CD8-positive, alpha-beta T cell (primary cell): ENCODE measurements at regions of chr6 and their contacts with region 1.

Region 1: GRCh38 chr6:35731736-35732532 is 4.9 kb upstream of the ARMC12 start:
- DNase-seq: peak; percentile 86 to 98 (median 95)
- ATAC-seq: peak; percentile 55
- H3K4me3 ChIP-seq: peak overlapping the region; percentile 70 to 91
- H3K4me3 Mint-ChIP-seq: peak overlapping the region; percentile 91
- H3K27ac ChIP-seq: peak overlapping the region; percentile 91 to 95
- H3K27ac Mint-ChIP-seq: peak overlapping the region; percentile 89
- H3K4me1 ChIP-seq: peaks cover 87% of the 10 kb centered on the region
- H3K4me1 Mint-ChIP-seq: peaks cover 80% of the 10 kb centered on the region
- H3K27me3 ChIP-seq: no peaks in the 10 kb centered on the region
- H3K27me3 Mint-ChIP-seq: no peaks in the 10 kb centered on the region
- CTCF ChIP-seq: peak; percentile 17

Region 2: DNA sequence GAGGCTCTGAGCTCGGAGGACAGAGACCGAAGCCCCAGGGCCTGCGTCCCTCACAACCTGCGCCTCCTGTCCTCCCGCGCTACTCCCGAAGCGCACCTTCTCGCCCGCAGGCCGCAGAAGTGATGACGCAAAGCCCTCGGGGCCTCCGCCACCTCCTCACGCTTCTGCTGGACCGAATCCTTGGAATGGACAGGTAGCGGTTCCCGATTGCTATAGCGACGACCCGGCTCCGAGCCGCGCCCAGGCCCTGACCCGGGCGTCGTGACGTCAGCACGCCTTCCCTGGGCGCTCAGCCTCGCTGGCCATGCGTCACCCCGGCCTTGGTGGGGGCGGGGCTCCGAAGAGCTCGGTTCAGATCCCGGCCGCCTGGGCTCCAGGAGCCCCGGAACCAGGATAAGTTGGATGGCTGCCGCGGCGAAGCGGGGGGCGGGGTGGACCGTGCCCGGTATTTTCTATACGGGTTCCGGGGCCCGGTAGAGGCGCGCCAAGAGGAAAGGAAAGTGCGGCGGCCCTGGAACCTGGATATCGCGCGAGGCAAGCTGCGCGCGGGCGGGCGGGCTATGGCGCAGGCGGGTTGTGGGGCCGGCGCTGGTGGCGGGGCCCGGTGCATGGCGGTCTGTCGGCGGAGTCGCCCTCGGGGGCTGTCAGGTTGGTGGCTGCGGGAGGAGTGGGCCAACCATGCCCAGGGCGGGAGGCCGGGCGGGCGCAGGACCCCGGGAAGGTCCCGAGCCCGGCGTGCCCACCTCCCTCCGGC is 472.6 kb before region 1 on chr6 and contains the start of gene ZNF76:
- CTCF ChIA-PET with region 1: no interaction called
- POLR2A ChIA-PET with region 1: no interaction called
- intact Hi-C with region 1: loop called in 1 of 2 experiments (anchors 2 kb)
- DNase-seq: peak; percentile 86 to 97 (median 93)
- ATAC-seq: peak; percentile 73
- H3K4me3 ChIP-seq: peak within 1 kb of the TSS; percentile 75 to 95
- H3K4me3 Mint-ChIP-seq: peak within 1 kb of the TSS; percentile 97
- H3K27ac ChIP-seq: peak within 1 kb of the TSS; percentile 88 to 96
- H3K27ac Mint-ChIP-seq: peak within 1 kb of the TSS; percentile 99
- H3K4me1 ChIP-seq: peaks cover 42% of the 10 kb centered on the region
- H3K4me1 Mint-ChIP-seq: peaks cover 55% of the 10 kb centered on the region
- H3K27me3 ChIP-seq: no peaks in the 10 kb centered on the region
- H3K27me3 Mint-ChIP-seq: no peaks in the 10 kb centered on the region
- CTCF ChIP-seq: no peak
- total RNA-seq, gene ZNF76: 54.6 to 57.8 TPM

Region 3: DNA sequence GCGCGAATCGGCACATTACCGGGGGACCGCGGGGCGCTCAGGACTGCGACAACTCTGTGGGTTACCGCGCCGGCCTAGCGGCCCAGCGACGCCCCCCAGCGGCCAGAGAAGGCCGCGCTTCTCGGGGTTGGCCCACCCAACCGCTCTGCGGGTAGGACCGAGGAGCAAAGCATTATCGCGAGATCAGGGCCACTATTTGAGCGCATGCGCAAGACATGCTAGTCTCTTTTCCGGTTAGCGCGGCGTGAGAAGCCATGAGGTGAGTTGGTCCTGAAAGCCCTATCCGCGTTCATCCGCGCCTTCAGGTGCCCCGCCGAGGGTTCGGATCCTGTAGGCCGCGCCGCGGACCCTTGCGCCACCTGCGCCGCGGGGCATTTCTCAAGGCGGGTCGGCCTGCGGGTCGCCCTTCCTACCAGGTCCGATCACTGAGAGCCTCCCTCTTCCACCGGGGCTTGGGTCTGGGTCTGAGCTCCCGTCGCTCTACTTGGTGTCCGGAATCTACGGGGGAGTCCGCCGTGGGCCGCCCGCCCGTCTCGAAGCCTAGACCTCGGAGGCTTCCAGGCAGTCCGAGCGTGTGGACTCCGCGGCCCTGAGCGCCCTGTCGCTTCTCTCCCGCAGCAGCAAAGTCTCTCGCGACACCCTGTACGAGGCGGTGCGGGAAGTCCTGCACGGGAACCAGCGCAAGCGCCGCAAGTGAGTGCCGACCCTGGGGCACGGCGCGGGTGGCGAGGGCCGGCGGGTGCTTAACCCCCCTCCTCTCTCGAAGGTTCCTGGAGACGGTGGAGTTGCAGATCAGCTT is 263.6 kb before region 1 on chr6 and contains the start of gene RPL10A:
- CTCF ChIA-PET with region 1: interaction called, 10 read pairs
- POLR2A ChIA-PET with region 1: interaction called, 5 read pairs
- intact Hi-C with region 1: loop called (anchors 2 to 5 kb)
- DNase-seq: peak; percentile 90 to 99 (median 96)
- ATAC-seq: peak; percentile 88
- H3K4me3 ChIP-seq: peak within 1 kb of the TSS; percentile 74 to 100
- H3K4me3 Mint-ChIP-seq: peak within 1 kb of the TSS; percentile 96
- H3K27ac ChIP-seq: peak within 1 kb of the TSS; percentile 76 to 90
- H3K27ac Mint-ChIP-seq: peak within 1 kb of the TSS; percentile 99
- H3K4me1 ChIP-seq: peaks cover 26% of the 10 kb centered on the region
- H3K4me1 Mint-ChIP-seq: peaks cover 39% of the 10 kb centered on the region
- H3K27me3 ChIP-seq: no peaks in the 10 kb centered on the region
- H3K27me3 Mint-ChIP-seq: no peaks in the 10 kb centered on the region
- CTCF ChIP-seq: peak; percentile 90
- total RNA-seq, gene RPL10A: 2,275 to 2,367 TPM

Region 4: DNA sequence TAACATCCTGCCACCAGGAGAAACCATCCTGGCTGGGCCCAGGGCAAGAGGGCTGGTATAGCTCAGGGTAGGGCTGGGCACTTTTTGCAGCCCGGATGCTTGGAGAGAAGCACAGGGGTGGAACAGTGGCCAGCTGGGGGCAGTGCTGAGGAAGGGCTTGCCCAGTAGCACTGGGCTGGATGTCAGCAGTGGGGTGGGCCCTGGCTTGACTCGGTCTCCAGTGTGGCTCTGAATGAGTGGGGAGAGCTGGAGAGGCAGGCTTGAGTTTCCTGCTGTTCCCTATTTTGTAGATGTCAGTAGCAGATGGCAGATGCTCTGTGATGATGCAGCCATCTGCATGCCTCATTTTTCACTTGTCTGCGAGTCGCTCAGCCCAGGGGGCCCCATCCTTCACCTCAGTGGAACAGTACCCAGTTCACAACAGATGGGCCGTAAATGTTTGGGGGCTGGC is 162.9 kb before region 1 on chr6:
- CTCF ChIA-PET with region 1: interaction called, 30 read pairs
- POLR2A ChIA-PET with region 1: no interaction called
- intact Hi-C with region 1: loop called in 1 of 2 experiments (anchors 5 kb)
- DNase-seq: peak in 7 of 9 experiments; percentile 5 to 62 (median 40)
- ATAC-seq: peak; percentile 48
- H3K4me3 ChIP-seq: no peak overlapping the region
- H3K4me3 Mint-ChIP-seq: no peak overlapping the region
- H3K27ac ChIP-seq: no peak overlapping the region
- H3K27ac Mint-ChIP-seq: peak overlapping the region; percentile 66
- H3K4me1 ChIP-seq: no peaks in the 10 kb centered on the region
- H3K4me1 Mint-ChIP-seq: peaks cover 8% of the 10 kb centered on the region
- H3K27me3 ChIP-seq: no peaks in the 10 kb centered on the region
- H3K27me3 Mint-ChIP-seq: peaks cover 4% of the 10 kb centered on the region
- CTCF ChIP-seq: no peak

Region 5: DNA sequence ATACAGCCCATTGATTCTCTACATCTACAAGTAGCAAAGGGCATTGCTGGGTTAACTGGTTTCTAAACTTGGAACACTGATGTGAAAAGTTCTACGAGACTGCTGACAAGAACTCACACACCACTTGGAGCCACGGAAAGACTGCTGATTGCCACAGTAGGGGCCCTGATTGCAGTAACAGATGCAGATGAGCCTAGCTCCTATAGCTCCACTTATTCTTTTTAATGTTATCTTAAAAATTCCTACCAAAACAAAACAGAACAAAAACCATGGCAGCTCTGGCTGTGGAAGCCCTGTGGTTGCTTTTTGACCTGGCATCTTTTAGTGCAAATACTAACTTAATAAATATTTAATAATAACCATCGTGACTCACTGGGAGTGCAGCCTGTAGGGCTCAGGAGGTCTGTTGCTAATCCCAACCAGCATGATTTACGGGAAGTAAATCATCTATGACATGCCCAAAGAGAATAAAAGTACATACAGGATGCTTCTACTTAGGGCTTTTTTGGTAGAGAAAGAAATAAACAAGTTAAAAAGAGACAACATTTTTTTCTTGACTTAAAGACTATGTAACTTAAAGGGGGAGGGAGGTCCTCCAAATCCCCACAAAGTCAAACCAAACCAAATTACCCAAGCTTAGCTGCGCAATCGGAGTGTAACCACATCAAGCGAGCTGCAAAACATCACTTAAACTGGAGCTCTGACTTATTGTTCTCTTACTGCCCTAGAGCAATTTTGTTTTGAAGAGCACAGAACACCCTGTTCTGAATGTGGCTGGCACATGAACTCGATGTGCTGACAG is 130.4 kb before region 1 on chr6:
- CTCF ChIA-PET with region 1: interaction called, 40 read pairs
- POLR2A ChIA-PET with region 1: interaction called, 34 read pairs
- intact Hi-C with region 1: loop called (anchors 1 kb)
- DNase-seq: peak; percentile 36 to 94 (median 69)
- ATAC-seq: peak; percentile 78
- H3K4me3 ChIP-seq: peak overlapping the region; percentile 27 to 47
- H3K4me3 Mint-ChIP-seq: peak overlapping the region; percentile 76
- H3K27ac ChIP-seq: peak overlapping the region; percentile 50 to 63
- H3K27ac Mint-ChIP-seq: peak overlapping the region; percentile 93
- H3K4me1 ChIP-seq: peaks cover 89% of the 10 kb centered on the region
- H3K4me1 Mint-ChIP-seq: peaks cover 76% of the 10 kb centered on the region
- H3K27me3 ChIP-seq: no peaks in the 10 kb centered on the region
- H3K27me3 Mint-ChIP-seq: no peaks in the 10 kb centered on the region
- CTCF ChIP-seq: no peak

Region 6: GRCh38 chr6:35640017-35640664 is 91.8 kb before region 1 on chr6:
- CTCF ChIA-PET with region 1: interaction called, 123 read pairs
- POLR2A ChIA-PET with region 1: interaction called, 5 read pairs
- intact Hi-C with region 1: loop called (anchors 2 to 5 kb)
- DNase-seq: no peak
- ATAC-seq: no peak
- H3K4me3 ChIP-seq: no peak overlapping the region
- H3K4me3 Mint-ChIP-seq: no peak overlapping the region
- H3K27ac ChIP-seq: no peak overlapping the region
- H3K27ac Mint-ChIP-seq: peak overlapping the region; percentile 83
- H3K4me1 ChIP-seq: peaks cover 21% of the 10 kb centered on the region
- H3K4me1 Mint-ChIP-seq: peaks cover 59% of the 10 kb centered on the region
- H3K27me3 ChIP-seq: no peaks in the 10 kb centered on the region
- H3K27me3 Mint-ChIP-seq: no peaks in the 10 kb centered on the region
- CTCF ChIP-seq: no peak

Region 7: DNA sequence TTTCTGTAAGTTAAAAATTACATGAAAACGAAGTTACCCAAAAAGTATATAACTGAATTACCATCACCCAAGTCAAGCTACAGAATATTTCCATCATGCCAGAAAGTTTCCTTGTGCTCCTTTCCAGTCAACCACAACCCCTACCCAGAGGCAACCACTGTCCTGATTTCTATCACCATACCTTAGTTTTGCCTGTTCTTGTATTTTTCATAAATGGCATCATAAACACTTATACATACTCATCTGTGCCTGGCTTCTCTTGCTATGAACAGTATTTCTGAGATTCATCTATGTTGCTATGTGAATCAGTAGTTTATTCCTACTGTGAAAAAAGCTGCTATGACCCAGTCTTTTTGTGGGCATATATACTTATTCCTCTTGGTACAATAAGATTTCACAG is 50.6 kb before region 1 on chr6:
- CTCF ChIA-PET with region 1: interaction called, 29 read pairs
- POLR2A ChIA-PET with region 1: interaction called, 19 read pairs
- intact Hi-C with region 1: no loop called
- DNase-seq: no peak
- ATAC-seq: no peak
- H3K4me3 ChIP-seq: no peak overlapping the region
- H3K4me3 Mint-ChIP-seq: peak overlapping the region; percentile 4
- H3K27ac ChIP-seq: no peak overlapping the region
- H3K27ac Mint-ChIP-seq: peak overlapping the region; percentile 79
- H3K4me1 ChIP-seq: peaks cover 56% of the 10 kb centered on the region
- H3K4me1 Mint-ChIP-seq: peaks cover 62% of the 10 kb centered on the region
- H3K27me3 ChIP-seq: no peaks in the 10 kb centered on the region
- H3K27me3 Mint-ChIP-seq: no peaks in the 10 kb centered on the region
- CTCF ChIP-seq: no peak

Region 8: DNA sequence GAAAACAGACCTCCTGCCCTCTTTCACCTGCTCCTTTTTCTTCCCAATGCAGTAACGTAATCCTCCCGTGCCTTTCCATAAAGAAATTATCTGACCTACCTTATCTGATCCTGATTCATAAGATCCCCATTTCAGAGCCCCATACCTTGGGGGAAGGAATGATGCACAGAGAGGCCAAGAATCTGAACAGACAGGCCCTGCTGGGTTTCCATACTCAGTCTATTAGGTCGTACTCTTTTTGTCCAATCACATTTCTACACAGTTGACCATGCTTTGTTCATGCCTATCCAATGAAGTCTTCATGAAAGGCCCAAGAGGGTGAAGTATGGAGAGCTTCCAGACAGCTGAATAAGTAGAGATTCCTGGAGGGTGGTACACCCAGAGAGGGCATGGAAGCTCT is 163.6 kb after region 1 on chr6:
- CTCF ChIA-PET with region 1: no interaction called
- POLR2A ChIA-PET with region 1: no interaction called
- intact Hi-C with region 1: no loop called
- DNase-seq: no peak
- ATAC-seq: no peak
- H3K4me3 ChIP-seq: no peak overlapping the region
- H3K4me3 Mint-ChIP-seq: no peak overlapping the region
- H3K27ac ChIP-seq: no peak overlapping the region
- H3K27ac Mint-ChIP-seq: no peak overlapping the region
- H3K4me1 ChIP-seq: no peaks in the 10 kb centered on the region
- H3K4me1 Mint-ChIP-seq: peaks cover 20% of the 10 kb centered on the region
- H3K27me3 ChIP-seq: no peaks in the 10 kb centered on the region
- H3K27me3 Mint-ChIP-seq: no peaks in the 10 kb centered on the region
- CTCF ChIP-seq: no peak